SK-N-SH (cell line): ENCODE measurements at regions of chr1 and their contacts with region 1.

Region 1: GRCh38 chr1:25904943-25905679 is 1.1 kb downstream of the STMN1 start:
- DNase-seq: peak; percentile 94
- H3K4me3 ChIP-seq: peak overlapping the region; percentile 85 to 92
- H3K27ac ChIP-seq: peak overlapping the region; percentile 84 to 92
- H3K4me1 ChIP-seq: peaks cover 13% of the 10 kb centered on the region in 2 experiments; a peak in 3 of 4 replicates
- H3K27me3 ChIP-seq: no peaks in the 10 kb centered on the region
- CTCF ChIP-seq: peak; percentile 51
- EP300 ChIP-seq: no peak
- RAD21 ChIP-seq: no peak

Region 2: GRCh38 chr1:25927521-25928265 is 22.6 kb after region 1 on chr1:
- CTCF ChIA-PET with region 1: interaction called, 3 read pairs
- POLR2A ChIA-PET with region 1: interaction called, 13 read pairs
- DNase-seq: peak; percentile 74
- H3K4me3 ChIP-seq: no peak overlapping the region
- H3K27ac ChIP-seq: peak overlapping the region in 1 of 2 experiments; percentile 98; a peak in 2 of 4 replicates
- H3K4me1 ChIP-seq: peaks cover 0 to 24% of the 10 kb centered on the region in 2 experiments; a peak in 1 of 4 replicates
- H3K27me3 ChIP-seq: no peaks in the 10 kb centered on the region
- CTCF ChIP-seq: no peak
- EP300 ChIP-seq: no peak
- RAD21 ChIP-seq: no peak

Region 3: DNA sequence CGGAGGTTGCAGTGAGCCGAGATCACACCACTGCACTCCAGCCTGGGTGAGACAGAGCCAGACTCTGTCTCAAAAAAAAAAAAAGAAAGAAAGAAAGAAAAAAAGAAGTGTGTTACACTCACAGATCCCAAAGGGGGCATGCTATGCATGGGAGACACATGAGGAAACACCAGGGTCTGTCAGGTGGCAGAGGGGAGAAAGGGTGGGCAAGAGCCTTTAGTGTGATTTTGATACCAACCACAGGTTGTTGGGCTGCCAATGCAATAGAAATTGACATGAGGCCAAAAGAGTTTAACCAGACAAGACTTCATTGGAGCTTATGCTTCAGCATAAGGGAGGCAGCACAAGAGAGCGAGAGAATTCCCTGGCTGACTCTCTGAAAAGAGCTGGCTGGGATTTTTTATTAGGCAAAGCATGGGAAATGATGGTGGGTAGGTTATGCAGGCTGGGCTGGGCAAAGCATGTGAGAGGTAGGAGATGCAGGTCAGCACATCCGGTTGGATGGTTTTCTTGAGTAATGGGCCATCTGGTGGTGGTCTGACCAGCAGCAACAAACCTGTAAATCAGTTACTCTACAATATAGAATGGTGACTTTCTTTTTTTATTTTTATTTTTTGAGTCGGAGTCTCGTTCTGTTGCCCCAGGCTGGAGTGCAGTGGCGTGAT is 104.8 kb after region 1 on chr1:
- CTCF ChIA-PET with region 1: interaction called, 344 read pairs
- POLR2A ChIA-PET with region 1: interaction called, 3 read pairs
- DNase-seq: peak; percentile 51
- H3K4me3 ChIP-seq: no peak overlapping the region
- H3K27ac ChIP-seq: no peak overlapping the region
- H3K4me1 ChIP-seq: no peaks in the 10 kb centered on the region
- H3K27me3 ChIP-seq: no peaks in the 10 kb centered on the region
- CTCF ChIP-seq: peak; percentile 41
- EP300 ChIP-seq: no peak
- RAD21 ChIP-seq: peak; percentile 54

Region 4: GRCh38 chr1:26126321-26127084 is 221.4 kb after region 1 on chr1:
- CTCF ChIA-PET with region 1: no interaction called
- POLR2A ChIA-PET with region 1: no interaction called
- DNase-seq: no peak
- H3K4me3 ChIP-seq: no peak overlapping the region
- H3K27ac ChIP-seq: no peak overlapping the region
- H3K4me1 ChIP-seq: peaks cover 4 to 8% of the 10 kb centered on the region in 2 experiments; a peak in 3 of 4 replicates
- H3K27me3 ChIP-seq: no peaks in the 10 kb centered on the region
- CTCF ChIP-seq: no peak
- EP300 ChIP-seq: no peak
- RAD21 ChIP-seq: no peak